ENCODE measurements at regions of chr16 and their contacts with region 1.

Region 1: GRCh38 chr16:970766-971581 is at the start of gene LMF1:
- DNase-seq: peak; percentile 99
- H3K4me3 Mint-ChIP-seq: peak within 1 kb of the TSS; percentile 80
- H3K27ac Mint-ChIP-seq: peak within 1 kb of the TSS; percentile 62
- H3K4me1 Mint-ChIP-seq: peaks cover 11% of the 10 kb centered on the region
- H3K27me3 Mint-ChIP-seq: peaks cover 7% of the 10 kb centered on the region
- total RNA-seq, gene LMF1: 10.4 and 11.9 TPM in 2 replicates

Region 2: GRCh38 chr16:920717-921116 is 50.3 kb before region 1 on chr16:
- intact Hi-C with region 1: no loop called
- DNase-seq: no peak
- H3K4me3 Mint-ChIP-seq: no peak overlapping the region
- H3K27ac Mint-ChIP-seq: no peak overlapping the region
- H3K4me1 Mint-ChIP-seq: no peaks in the 10 kb centered on the region
- H3K27me3 Mint-ChIP-seq: no peaks in the 10 kb centered on the region

Region 3: DNA sequence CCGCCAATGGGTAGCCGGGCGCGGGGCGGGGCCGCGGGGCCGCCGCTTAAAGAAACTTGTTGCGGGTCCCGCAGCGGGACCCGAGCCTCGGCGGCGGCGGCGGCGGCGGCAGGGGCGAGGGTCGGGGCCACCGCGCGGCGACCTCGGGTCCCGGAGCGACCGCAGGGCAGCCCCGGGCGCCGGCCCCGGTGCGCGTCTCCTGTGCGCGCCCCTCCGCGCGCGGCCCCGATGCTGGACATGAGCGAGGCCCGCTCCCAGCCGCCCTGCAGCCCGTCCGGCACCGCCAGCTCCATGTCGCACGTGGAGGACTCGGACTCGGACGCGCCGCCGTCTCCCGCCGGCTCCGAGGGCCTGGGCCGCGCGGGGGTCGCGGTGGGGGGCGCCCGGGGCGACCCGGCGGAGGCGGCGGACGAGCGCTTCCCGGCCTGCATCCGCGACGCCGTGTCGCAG is 10.7 kb after region 1 on chr16 and contains the start of gene SOX8:
- intact Hi-C with region 1: loop called (anchors 1 kb)
- DNase-seq: no peak
- H3K4me3 Mint-ChIP-seq: peak within 1 kb of the TSS; percentile 83
- H3K27ac Mint-ChIP-seq: peak within 1 kb of the TSS; percentile 77
- H3K4me1 Mint-ChIP-seq: peaks cover 4% of the 10 kb centered on the region
- H3K27me3 Mint-ChIP-seq: peaks cover 24% of the 10 kb centered on the region
- total RNA-seq, gene SOX8: 0.77 and 0.92 TPM in 2 replicates

Region 4: GRCh38 chr16:1003391-1004347 is 32.7 kb after region 1 on chr16:
- intact Hi-C with region 1: loop called (anchors 2 kb)
- DNase-seq: peak; percentile 86
- H3K4me3 Mint-ChIP-seq: peak overlapping the region; percentile 50
- H3K27ac Mint-ChIP-seq: peak overlapping the region; percentile 77
- H3K4me1 Mint-ChIP-seq: peaks cover 15% of the 10 kb centered on the region
- H3K27me3 Mint-ChIP-seq: peaks cover 18% of the 10 kb centered on the region

Region 5: DNA sequence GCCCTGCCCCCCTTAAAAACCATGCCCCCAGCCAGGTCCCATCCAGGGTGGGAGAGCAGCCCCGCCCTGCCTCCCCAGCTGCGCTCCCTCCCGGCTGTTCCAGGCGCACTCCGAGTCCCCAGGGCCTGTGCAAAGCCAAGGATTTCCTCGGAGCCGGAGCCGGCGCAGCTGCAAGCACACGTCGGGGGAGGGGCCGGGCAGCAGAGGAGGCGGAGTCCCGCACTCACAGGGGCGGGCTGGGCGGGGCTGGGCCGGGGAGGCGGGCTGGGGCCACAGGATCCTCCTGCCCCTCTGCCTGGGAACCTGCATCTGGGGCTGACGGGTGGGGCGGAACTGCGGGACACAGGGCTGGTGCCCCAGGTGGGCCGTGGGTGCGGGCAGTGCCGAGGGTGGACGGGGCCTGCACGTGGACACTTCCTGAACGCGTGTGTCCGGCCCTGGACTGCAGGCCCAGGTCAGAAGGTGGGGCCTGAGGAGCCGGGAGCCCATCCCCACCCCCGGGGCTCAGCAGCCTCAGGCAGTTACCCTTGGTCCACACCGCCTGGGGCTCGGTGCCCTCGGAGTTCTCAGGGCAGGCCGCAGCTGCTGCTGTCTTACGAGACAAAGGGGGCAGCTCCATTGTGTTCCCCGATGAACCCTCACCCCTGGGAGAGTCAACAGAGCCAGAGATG is 77.6 kb after region 1 on chr16:
- intact Hi-C with region 1: no loop called
- DNase-seq: peak; percentile 61
- H3K4me3 Mint-ChIP-seq: no peak overlapping the region
- H3K27ac Mint-ChIP-seq: no peak overlapping the region
- H3K4me1 Mint-ChIP-seq: no peaks in the 10 kb centered on the region
- H3K27me3 Mint-ChIP-seq: no peaks in the 10 kb centered on the region

Region 6: DNA sequence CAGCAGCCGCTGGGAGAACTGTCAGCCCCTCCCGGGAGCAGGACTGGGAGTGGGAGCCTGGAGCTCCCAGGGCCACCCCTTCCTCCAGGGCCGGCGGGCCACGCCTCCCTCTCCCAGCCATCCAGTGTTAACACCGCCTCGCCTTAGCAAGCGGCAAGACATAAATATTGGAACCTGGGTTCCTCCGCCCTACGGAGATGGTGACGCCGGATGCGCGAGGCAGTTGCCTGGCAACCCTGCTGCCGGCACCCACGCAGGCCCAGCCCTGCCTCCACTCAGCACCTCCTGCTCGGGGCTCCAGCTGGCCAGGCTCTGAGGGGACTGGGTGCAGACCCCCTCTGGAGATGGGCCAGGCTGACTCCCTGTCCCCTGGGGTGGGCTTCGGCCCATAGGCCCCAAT is 154.5 kb after region 1 on chr16:
- intact Hi-C with region 1: no loop called
- DNase-seq: peak; percentile 72
- H3K4me3 Mint-ChIP-seq: no peak overlapping the region
- H3K27ac Mint-ChIP-seq: no peak overlapping the region
- H3K4me1 Mint-ChIP-seq: no peaks in the 10 kb centered on the region
- H3K27me3 Mint-ChIP-seq: no peaks in the 10 kb centered on the region

Region 7: GRCh38 chr16:1197237-1197866 is 226.4 kb after region 1 on chr16:
- intact Hi-C with region 1: no loop called
- DNase-seq: no peak
- H3K4me3 Mint-ChIP-seq: no peak overlapping the region
- H3K27ac Mint-ChIP-seq: no peak overlapping the region
- H3K4me1 Mint-ChIP-seq: no peaks in the 10 kb centered on the region
- H3K27me3 Mint-ChIP-seq: no peaks in the 10 kb centered on the region

Measured in activated CD4-positive, alpha-beta T cell treated with anti-CD3 and anti-CD28 coated beads, Interleukin-2, amount 10 ng/mL, durations not matched to agents 24 days and 14 days (primary cell).